Left colon (tissue), 2 donors: ENCODE measurements at regions of chr10 and their contacts with region 1.

Region 1: DNA sequence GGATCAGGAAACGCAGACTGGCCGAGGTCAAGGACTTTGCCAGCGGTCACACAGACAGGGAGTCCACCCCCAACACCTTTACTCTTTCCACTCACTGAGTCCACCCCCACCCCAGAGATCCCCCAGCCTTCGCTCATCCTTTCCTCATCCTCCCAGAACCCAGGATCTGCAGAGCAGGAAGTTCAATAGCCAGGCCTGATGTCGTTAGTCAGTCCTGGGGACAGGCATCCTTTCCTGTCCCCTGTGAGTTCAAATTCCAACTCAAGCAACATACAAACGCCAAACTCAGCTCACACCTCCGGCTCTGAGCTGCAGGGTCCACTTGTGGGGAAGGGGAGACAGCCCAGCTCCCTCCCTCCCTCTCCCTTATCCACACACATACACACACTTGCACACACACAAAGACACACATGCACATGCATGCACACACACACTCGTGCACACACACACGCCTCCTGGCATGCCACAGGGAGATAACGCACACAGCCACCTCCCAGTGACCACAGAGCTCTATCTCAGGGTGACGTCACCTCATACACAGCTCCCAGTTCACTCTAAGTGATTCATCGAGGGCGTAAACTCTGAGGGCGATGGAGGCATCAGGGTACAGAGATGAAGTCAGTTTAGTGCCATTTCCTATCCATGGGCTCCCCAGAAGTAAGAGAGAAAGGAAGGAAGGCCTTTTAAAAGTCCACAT is 23.9 kb downstream of the CALML3 start:
- DNase-seq: peak; percentile 76 to 93
- ATAC-seq: peak; percentile 62

Region 2: DNA sequence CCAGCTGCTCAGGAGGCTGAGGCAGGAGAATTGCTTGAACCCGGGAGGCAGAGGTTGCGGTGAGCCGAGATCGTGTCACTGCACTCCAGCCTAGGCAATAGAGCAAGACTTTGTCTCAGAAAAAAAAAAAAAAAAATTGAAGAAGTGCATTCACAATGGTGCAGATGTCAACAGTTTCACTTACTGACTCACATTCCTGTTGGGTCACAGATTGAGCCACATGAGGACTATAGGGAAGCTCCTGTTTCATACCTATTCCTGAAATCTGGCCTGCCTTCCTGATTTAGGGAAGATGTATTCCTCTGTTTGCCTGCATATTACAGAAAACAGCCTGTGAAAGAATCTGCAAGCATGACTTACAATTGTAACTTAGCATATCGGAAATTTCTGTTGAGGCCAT is 273.9 kb before region 1 on chr10:
- intact Hi-C with region 1: no loop called
- DNase-seq: no peak
- ATAC-seq: no peak

Region 3: DNA sequence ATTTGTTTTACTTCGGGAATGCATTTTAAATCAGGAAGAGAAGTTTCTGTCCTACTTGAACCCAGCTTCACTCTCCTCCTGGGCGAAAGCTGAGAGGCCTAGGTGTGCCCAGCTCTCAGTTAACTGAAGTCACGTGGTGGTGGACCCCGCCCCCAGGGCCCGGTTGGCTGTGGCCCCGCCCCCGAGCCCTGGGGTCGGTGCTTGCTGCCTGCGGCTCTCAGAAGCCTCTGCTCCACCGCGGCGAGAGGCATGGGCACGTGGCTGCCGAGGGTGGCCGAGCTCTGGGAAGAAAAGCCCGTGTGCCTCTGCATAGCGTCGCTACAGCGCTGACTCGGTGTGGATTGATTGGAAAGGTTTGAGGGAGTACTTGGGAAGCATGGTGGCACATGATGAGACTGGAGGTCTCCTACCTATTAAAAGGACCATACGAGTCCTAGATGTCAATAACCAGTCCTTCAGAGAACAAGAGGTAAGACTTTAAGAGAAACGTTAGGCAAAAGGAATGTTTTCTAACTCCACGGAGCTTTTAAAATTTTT is 102.2 kb before region 1 on chr10:
- intact Hi-C with region 1: loop called in 1 of 2 experiments (anchors 5 kb)
- DNase-seq: peak; percentile 95 to 98
- ATAC-seq: peak; percentile 72

Region 4: GRCh38 chr10:5575482-5576166 is 26.9 kb after region 1 on chr10:
- intact Hi-C with region 1: loop called in 1 of 2 experiments (anchors 2 kb)
- DNase-seq: no peak
- ATAC-seq: no peak

Region 5: GRCh38 chr10:5614155-5614721 is 65.6 kb after region 1 on chr10:
- intact Hi-C with region 1: loop called in 1 of 2 experiments (anchors 10 kb)
- DNase-seq: no peak
- ATAC-seq: no peak

Region 6: DNA sequence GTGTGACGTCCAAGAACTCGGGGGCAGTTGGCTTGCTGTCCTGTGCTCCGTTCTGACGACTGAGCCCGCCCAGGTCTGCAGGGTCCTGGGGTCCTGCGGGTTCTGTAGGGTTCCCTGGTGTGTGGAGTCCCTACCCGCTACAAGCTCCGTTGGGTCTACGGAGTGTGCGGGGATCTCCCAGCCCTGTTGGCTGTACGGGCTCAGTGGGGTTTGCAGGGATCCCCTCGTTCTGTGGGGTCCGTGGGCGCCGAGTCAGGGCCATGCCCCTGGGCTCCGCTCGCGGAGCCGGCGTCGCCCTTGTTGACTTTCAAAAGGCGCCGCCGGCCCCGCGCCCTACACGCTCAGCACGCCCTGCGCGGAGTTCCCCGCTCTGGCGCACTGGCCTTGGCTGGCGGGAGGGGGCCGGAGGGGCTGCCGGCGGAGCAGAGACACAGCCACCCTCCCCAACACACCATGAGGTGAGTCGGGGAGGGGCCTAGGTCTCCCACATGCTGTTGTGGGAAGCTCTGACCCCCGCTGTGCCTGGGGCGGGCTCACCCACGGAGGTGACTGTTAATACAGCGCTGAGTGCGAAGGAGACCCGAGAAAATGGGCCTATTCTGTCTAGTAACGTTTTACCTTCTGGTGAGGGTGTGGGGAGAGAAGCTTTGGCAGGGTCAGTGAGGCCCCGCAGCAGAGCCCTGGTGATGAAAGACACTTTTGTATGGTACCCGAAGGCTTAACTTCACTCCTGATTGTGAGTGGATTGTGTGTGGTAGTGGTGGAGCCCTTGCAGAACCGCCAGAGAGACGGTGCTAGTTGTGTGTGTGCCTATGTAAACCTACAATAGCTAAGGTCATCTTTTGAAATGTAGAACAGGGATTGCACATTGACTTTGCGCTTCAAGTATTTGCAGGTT is 144.0 kb after region 1 on chr10:
- intact Hi-C with region 1: no loop called
- DNase-seq: peak; percentile 53 to 74
- ATAC-seq: peak; percentile 80